ENCODE measurements at regions of chr11 and their contacts with region 1.

Region 1: GRCh38 chr11:119196833-119197483 is 9.2 kb upstream of the CBL start:
- DNase-seq: peak; percentile 8
- ATAC-seq: peak; percentile 93

Region 2: DNA sequence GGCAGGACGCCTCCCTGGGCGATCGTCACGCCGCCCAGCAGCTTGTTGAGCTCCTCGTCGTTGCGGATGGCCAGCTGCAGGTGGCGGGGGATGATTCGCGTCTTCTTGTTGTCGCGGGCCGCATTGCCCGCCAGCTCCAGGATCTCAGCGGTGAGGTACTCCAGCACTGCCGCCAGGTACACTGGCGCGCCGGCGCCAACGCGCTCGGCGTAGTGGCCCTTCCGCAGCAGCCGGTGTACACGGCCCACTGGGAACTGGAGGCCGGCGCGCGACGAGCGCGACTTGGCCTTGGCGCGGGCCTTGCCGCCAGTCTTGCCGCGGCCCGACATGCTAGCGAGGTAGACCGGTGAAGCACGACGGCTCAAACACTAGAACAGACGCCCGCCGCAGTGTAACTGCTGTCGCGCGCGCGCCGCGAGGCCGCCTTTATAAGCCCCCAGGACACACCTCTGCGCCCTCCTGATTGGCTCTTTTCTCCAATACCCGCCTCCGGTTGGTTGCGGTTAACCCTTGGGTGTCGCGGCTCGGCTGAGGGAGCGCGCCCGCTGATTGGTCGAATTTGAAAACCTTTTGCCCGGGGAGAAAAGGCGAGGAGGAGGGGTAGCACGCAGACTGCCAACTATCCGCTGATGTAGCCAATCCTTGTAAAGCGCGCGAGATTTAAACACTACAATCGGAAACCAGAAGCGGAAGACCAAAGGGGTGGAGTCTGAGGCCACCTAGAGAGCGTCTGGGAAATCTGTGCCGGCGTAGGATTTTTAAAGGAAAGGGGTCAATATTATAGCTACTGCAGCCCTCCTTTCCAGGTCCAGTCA is 101.7 kb before region 1 on chr11:
- intact Hi-C with region 1: loop called (anchors 2 kb)
- DNase-seq: peak; percentile 98
- ATAC-seq: peak; percentile 97

Region 3: GRCh38 chr11:119144825-119145486 is 52.0 kb before region 1 on chr11:
- intact Hi-C with region 1: loop called (anchors 5 kb)
- DNase-seq: peak; percentile 66
- ATAC-seq: peak; percentile 87

Region 4: GRCh38 chr11:119262668-119263351 is 65.9 kb after region 1 on chr11:
- intact Hi-C with region 1: no loop called
- DNase-seq: no peak
- ATAC-seq: no peak